GM18951 (cell line): ENCODE measurements at regions of chr5 and their contacts with region 1.

Region 1: DNA sequence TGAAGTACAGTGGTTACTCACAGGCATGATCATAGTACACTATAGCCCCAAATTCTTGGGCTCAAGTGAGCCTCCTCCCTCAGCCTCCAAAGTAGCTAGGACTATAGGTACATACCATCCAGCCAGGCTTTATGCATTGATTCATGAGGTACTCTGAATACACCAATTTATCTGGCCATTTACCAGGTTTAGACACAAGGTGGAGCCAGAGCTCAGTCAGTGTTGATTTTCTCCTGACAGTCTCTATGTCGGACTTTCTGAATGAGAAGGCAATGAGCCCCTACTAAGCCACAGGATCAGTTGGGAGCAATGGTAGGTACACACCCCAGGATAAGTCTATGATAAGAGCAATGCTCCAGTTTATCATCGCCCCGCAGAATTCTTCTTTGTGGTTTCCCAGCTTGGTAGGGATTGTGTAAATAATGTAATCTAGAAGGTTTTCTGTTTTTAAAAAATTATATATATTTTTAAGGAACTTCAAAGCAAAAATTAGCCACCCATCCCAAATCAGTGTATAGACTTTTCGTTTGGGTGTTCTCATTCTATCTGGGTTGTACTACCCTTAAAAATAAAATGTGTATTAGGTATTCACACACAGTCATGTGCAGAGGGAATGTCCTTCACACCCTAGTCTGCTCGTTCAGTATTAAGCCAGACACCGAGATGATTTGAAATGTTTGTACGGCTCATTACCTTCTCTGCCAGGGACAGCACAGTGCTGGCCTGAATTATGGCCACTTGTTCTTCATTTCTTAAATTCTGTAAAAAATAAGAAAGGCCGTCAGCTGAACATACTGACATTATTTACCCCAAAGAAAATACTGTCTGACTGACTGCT is 118.4 kb upstream of the DPYSL3 start:
- POLR2A ChIP-seq: no peak

Region 2: DNA sequence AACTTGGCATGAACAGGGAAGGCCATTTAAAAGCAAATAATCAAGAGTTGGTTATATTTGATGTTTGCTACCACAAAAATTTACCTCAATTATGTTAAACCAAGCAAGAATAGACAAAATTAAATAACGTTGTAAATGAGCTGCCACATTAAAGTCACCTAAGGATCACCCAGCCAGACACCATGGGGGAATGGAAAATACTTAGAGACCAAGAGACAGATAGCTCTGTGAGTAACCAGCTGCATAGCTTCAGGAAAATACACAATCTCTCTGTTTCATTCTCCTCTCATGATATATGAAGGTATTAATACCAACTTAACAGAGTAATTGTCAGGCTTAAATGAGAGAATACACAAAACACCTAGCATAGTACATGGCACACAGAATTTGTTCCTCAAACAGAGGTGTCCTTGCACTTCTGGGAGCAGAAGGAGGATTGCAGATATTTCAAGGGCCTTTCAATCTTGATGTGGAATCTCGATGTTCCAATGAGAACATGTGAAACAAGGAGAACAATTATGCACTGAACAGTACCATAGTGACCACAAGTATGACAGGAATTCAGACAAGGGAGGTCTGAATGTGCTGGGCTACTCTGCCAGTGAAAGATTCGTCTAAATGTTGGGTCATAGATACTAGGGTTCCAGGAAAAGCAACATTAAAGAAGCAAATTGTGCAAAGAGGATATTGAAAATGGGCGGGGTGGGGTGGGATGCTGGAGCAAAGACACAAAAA is 135.7 kb after region 1 on chr5:
- in situ Hi-C with region 1: no loop called
- POLR2A ChIP-seq: no peak

Region 3: GRCh38 chr5:147822686-147823491 is 194.6 kb after region 1 on chr5:
- in situ Hi-C with region 1: loop called (anchors 10 kb)
- POLR2A ChIP-seq: no peak